Esophagus muscularis mucosa (tissue), 4 donors: ENCODE measurements at regions of chr12 and their contacts with region 1.

Region 1: GRCh38 chr12:54324617-54325441 is at the start of gene COPZ1:
- DNase-seq: peak; percentile 99
- H3K4me3 ChIP-seq: peak within 1 kb of the TSS; percentile 58 to 79 (median 66)
- H3K27ac ChIP-seq: peak within 1 kb of the TSS; percentile 78 to 90 (median 85)
- H3K4me1 ChIP-seq: peaks cover 25 to 53% (median 50%) of the 10 kb centered on the region in 4 donors
- H3K27me3 ChIP-seq: no peaks in the 10 kb centered on the region
- CTCF ChIP-seq: peak; percentile 59 to 67 (median 61)
- EP300 ChIP-seq: no peak
- POLR2A ChIP-seq: peak; percentile 46
- total RNA-seq, gene COPZ1: 41.1 to 61.9 (median 48.5) TPM

Region 2: GRCh38 chr12:53989227-53990113 is 335.4 kb before region 1 on chr12:
- intact Hi-C with region 1: no loop called
- DNase-seq: no peak
- H3K4me3 ChIP-seq: no peak overlapping the region
- H3K27ac ChIP-seq: no peak overlapping the region
- H3K4me1 ChIP-seq: peaks cover 25 to 37% (median 27%) of the 10 kb centered on the region in 4 donors
- H3K27me3 ChIP-seq: peaks cover 16 to 100% (median 97%) of the 10 kb centered on the region in 4 donors
- CTCF ChIP-seq: peak in 1 of 3 experiments; percentile 17
- EP300 ChIP-seq: no peak
- POLR2A ChIP-seq: no peak

Region 3: DNA sequence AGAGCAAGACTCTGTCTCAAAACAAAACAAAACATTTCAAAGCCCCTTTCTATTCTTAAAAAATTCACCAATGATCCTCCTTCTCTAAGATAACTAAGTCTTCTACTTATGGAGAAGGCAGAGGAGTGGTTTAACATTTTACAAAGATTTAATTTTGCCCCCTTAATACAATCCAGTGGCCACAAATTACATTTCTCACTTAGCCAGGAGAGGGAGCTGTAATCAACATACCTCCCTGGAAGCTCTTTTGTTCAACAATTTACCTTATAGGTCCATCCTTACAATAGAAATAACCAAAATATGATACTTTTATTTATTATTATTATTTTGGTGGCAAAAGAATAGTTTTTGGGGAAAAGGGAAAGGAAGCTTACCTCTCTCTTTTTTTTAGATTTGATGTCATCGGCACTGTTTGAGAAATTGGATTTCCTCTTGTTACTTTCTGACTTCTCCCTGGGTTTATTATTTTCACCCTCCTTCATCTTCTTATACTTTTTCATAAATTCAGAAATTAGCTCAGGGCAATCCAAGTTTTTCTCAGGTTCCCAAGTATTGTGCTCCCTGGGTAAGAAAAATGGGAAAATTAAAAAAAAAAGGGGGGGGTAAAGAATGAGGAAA is 73.1 kb before region 1 on chr12:
- intact Hi-C with region 1: loop called (anchors 5 kb)
- DNase-seq: no peak
- H3K4me3 ChIP-seq: no peak overlapping the region
- H3K27ac ChIP-seq: no peak overlapping the region
- H3K4me1 ChIP-seq: peaks cover 12 to 28% (median 22%) of the 10 kb centered on the region in 4 donors
- H3K27me3 ChIP-seq: no peaks in the 10 kb centered on the region
- CTCF ChIP-seq: peak; percentile 65 to 71 (median 66)
- EP300 ChIP-seq: no peak
- POLR2A ChIP-seq: no peak

Region 4: GRCh38 chr12:54285150-54286041 is 39.4 kb before region 1 on chr12:
- intact Hi-C with region 1: loop called (anchors 5 kb)
- DNase-seq: no peak
- H3K4me3 ChIP-seq: no peak overlapping the region
- H3K27ac ChIP-seq: peak overlapping the region in 1 of 4 donors; percentile 30
- H3K4me1 ChIP-seq: peaks cover 50 to 58% (median 57%) of the 10 kb centered on the region in 4 donors
- H3K27me3 ChIP-seq: no peaks in the 10 kb centered on the region
- CTCF ChIP-seq: peak in 2 of 3 experiments; percentile 6 to 21
- EP300 ChIP-seq: no peak
- POLR2A ChIP-seq: no peak